Activated naive CD4-positive, alpha-beta T cell treated with anti-CD3 and anti-CD28 coated beads for 36 hours (primary cell): ENCODE measurements at regions of chr2 and their contacts with region 1.

Region 1: DNA sequence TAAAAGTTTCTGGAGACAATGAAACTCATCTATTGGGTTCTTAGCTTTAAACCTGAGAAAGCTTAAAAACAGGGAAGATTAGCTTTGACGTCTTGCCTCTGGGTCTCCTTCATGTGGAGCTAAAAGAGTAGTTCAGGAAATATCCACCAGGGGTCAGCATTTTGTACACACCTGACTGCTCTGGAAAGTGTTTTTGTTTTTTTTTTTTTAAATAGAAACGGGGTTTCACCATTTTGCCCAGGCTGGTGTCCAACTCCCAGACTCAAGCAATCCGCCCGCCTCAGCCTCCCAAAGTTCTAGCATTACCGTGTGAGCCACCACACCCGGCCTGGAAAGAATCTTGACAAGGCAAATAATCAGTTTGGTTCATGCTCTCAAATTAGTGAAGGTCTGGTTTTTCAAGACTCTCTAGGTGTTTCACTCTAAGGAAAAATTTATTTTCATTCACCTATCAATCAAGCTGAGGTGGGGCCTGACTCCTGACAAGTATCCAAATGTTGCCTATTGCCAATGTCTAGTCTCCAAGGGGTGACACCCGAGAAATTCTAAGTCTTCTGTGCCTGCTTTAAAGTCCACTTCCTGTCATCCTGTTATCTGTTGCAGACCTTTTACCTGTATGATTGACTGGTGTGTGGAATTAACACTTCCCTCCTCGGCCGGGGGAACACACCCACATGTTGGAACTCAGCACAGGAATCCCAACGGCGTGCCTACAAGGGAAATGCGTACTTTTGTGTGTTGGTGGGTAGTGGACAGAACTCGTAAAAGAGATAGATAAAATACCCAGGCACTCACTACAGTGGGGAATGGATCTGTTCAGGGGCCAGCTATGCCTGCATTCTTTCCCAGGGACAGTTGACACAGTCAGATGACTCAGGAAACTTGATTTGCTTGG is 11.3 kb downstream of the IL1RN start:
- DNase-seq: peak; percentile 65
- H3K4me3 Mint-ChIP-seq: peak overlapping the region; percentile 25
- H3K27ac Mint-ChIP-seq: peak overlapping the region; percentile 30
- H3K4me1 Mint-ChIP-seq: peaks cover 29% of the 10 kb centered on the region
- H3K27me3 Mint-ChIP-seq: no peaks in the 10 kb centered on the region

Region 2: DNA sequence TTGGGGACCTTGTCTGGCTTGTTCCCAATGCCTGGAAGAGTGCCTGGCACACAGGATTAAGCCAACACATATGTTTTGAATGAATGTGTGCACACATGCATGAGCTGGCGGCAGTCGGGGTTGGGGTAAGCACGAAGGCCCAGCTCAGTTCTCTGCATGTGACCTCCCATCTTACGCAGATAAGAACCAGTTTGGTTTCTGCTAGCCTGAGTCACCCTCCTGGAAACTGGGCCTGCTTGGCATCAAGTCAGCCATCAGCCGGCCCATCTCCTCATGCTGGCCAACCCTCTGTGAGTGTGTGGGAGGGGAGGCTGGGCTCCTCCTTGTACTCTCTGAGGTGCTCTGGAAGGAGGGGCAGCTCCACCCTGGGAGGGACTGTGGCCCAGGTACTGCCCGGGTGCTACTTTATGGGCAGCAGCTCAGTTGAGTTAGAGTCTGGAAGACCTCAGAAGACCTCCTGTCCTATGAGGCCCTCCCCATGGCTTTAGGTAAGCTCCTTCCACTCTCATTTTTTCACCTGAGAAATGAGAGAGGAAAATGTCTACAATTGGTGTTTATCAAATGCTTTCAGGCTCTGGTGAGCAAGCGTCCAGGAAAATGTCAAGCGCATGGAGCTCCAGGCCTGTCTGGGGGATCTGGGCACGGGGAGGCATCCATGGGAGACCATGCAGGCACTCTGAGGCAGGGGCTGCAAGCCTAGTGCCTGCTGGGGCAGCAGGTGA is 21.0 kb before region 1 on chr2:
- CTCF ChIA-PET with region 1: interaction called, 11 read pairs
- intact Hi-C with region 1: no loop called
- DNase-seq: peak; percentile 74
- H3K4me3 Mint-ChIP-seq: no peak overlapping the region
- H3K27ac Mint-ChIP-seq: no peak overlapping the region
- H3K4me1 Mint-ChIP-seq: peaks cover 14% of the 10 kb centered on the region
- H3K27me3 Mint-ChIP-seq: no peaks in the 10 kb centered on the region

Region 3: DNA sequence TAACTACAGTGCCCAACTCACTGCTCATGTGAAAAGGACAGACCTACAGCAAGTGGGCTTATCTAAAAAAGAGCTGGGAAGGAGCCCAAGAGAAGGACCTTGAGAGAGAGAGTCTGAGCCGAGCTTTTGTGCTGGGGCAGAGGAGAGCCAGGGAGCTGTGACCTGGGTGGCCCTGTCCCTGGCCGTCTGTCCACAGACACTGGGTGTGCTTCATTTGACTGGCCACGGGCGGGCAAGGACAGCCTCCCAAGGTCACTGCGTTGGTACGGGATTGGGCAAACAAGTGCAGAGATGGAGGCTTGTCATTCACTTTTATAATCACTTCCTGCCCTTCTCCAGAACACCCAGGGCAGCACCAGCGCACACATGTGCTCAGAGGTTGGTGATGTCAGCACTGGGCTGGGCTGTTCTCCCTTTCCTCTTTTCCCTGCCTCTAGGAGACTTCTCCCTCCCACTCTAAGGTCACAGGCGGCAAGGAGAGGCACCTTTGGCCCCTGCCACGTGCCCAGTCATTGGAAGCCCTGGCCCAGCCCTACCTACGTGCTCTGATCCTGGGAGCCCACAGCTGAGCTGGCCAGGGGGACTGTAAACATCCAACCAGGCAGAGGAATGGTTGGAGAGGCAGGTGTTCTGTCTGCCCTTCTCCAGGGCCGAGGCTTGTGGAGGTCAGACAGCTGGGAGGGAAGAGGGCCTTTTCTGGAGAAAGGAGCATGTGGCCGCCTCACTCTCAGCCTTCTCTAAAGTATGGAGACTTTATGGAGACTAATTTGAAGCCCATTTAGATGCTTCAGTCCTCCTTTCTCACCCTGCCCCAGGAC is 28.6 kb after region 1 on chr2:
- CTCF ChIA-PET with region 1: interaction called, 95 read pairs
- intact Hi-C with region 1: no loop called
- DNase-seq: peak; percentile 74
- H3K4me3 Mint-ChIP-seq: peak overlapping the region; percentile 61
- H3K27ac Mint-ChIP-seq: peak overlapping the region; percentile 99
- H3K4me1 Mint-ChIP-seq: peaks cover 71% of the 10 kb centered on the region
- H3K27me3 Mint-ChIP-seq: no peaks in the 10 kb centered on the region

Region 4: GRCh38 chr2:113192438-113193100 is 53.9 kb after region 1 on chr2:
- CTCF ChIA-PET with region 1: interaction called, 157 read pairs
- intact Hi-C with region 1: no loop called
- DNase-seq: no peak
- H3K4me3 Mint-ChIP-seq: no peak overlapping the region
- H3K27ac Mint-ChIP-seq: no peak overlapping the region
- H3K4me1 Mint-ChIP-seq: peaks cover 42% of the 10 kb centered on the region
- H3K27me3 Mint-ChIP-seq: no peaks in the 10 kb centered on the region

Region 5: DNA sequence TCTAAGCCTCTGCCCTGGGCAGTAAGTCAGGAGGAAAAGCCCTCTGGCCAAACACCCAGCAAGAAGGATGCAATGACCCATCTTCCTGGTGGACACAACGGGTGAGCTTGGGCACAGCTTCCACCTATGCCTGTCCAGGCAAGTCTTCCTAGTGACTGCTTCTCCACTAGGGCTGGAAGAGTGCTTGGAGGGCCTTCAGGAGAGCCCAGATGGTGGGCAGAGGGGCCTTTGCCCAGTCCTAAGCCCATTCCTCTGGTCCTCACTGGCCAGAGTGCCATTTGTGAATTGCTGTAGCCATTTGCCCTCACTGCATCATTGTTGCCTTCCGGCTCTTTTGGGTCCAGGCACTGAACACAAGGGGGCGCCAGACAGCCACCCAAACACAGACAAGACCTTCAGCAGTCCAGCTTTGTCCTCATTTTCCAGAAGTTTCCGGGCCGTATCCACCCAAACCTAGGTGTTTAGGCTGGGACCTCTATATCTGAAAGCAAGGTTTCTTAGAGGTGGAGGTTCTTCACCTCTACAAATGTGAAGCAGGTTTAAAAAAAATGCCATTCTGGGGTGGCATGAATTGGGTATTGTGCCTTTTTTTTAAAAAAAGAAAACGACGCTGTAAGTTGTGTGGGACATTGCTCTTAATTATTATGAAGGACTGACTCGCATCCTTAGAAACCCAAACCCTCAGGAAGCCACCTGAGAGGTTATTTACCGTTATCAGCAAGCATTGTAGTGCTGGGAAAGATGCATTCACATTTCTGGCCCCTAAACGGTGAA is 110.5 kb after region 1 on chr2:
- CTCF ChIA-PET with region 1: interaction called, 5 read pairs
- intact Hi-C with region 1: loop called (anchors 2 kb)
- DNase-seq: peak; percentile 88
- H3K4me3 Mint-ChIP-seq: no peak overlapping the region
- H3K27ac Mint-ChIP-seq: peak overlapping the region; percentile 37
- H3K4me1 Mint-ChIP-seq: peaks cover 48% of the 10 kb centered on the region
- H3K27me3 Mint-ChIP-seq: no peaks in the 10 kb centered on the region

Region 6: GRCh38 chr2:113784823-113785744 is 646.4 kb after region 1 on chr2:
- CTCF ChIA-PET with region 1: no interaction called
- intact Hi-C with region 1: no loop called
- DNase-seq: no peak
- H3K4me3 Mint-ChIP-seq: no peak overlapping the region
- H3K27ac Mint-ChIP-seq: no peak overlapping the region
- H3K4me1 Mint-ChIP-seq: no peaks in the 10 kb centered on the region
- H3K27me3 Mint-ChIP-seq: no peaks in the 10 kb centered on the region

Region 7: GRCh38 chr2:113889471-113890252 is 751.0 kb after region 1 on chr2 and contains the start of gene ACTR3:
- CTCF ChIA-PET with region 1: no interaction called
- intact Hi-C with region 1: no loop called
- DNase-seq: peak; percentile 99
- H3K4me3 Mint-ChIP-seq: peak within 1 kb of the TSS; percentile 95
- H3K27ac Mint-ChIP-seq: peak within 1 kb of the TSS; percentile 98
- H3K4me1 Mint-ChIP-seq: peaks cover 64% of the 10 kb centered on the region
- H3K27me3 Mint-ChIP-seq: no peaks in the 10 kb centered on the region
- total RNA-seq, gene ACTR3: 516 to 536 TPM